GM23248 (cell line): ENCODE measurements at regions of chr2 and their contacts with region 1.

Region 1: DNA sequence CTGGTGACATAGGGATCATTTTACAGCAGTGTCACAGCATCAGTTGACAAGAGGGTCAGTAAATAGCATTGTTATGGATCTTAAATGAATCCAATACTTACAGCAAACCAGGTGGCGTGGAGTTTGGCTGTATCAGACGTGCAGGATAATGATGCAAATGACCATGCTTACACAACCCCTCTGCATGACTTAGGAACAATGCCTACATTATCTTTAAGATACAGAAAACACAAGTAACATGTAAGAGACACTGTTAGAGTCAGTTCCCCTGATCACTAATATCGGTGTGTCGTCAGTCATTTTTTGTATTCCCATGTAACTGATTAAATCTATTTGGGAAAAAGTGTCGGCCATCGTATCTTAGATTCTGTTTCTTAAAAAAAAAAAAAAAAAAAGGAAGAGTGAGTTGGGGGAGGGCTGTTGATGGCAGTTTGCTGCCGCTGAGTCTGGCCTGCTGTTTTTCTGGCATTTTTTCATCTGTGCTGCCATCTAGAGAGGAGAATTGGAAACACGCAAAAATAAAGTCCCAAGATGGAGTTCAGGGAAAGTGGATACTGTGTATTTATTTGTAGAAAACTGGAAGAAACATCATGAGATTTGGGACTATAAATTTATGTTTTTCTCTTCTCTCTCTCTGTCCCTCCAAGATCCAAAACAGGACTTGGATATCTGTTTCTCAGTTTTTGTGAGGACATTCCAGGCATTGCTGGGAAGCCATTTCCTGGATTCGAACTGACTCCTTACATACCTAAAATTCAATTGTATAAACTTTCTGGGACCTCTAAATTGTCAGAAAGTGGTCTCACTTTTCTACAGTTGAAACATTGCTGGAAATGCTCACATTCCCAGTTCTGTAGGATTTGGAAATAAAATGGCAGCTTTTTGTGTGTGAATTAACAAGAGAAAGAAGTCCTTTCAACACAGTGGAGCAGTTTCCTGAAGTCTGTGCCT is 60.3 kb upstream of the AGPS start:
- DNase-seq: peak; percentile 87
- H3K4me3 ChIP-seq: 0 out of 2 replicates have a peak overlapping the region, but pooled peaks have one; percentile 13
- H3K27ac ChIP-seq: peak overlapping the region; percentile 53
- H3K4me1 ChIP-seq: peaks cover 26% of the 10 kb centered on the region
- H3K27me3 ChIP-seq: no peaks in the 10 kb centered on the region

Region 2: GRCh38 chr2:177419274-177419673 is 87.0 kb after region 1 on chr2:
- in situ Hi-C with region 1: loop called (anchors 10 kb)
- DNase-seq: peak; percentile 65
- H3K4me3 ChIP-seq: peak overlapping the region; percentile 45
- H3K27ac ChIP-seq: peak overlapping the region; percentile 12; the same call in 1 of the 2 replicates
- H3K4me1 ChIP-seq: peaks cover 45% of the 10 kb centered on the region
- H3K27me3 ChIP-seq: no peaks in the 10 kb centered on the region

Region 3: GRCh38 chr2:177520356-177520723 is 188.0 kb after region 1 on chr2:
- in situ Hi-C with region 1: no loop called
- DNase-seq: no peak
- H3K4me3 ChIP-seq: no peak overlapping the region
- H3K27ac ChIP-seq: no peak overlapping the region
- H3K4me1 ChIP-seq: no peaks in the 10 kb centered on the region
- H3K27me3 ChIP-seq: no peaks in the 10 kb centered on the region